Pancreas (tissue), 10 donors: ENCODE measurements at regions of chr11 and their contacts with region 1.

Region 1: DNA sequence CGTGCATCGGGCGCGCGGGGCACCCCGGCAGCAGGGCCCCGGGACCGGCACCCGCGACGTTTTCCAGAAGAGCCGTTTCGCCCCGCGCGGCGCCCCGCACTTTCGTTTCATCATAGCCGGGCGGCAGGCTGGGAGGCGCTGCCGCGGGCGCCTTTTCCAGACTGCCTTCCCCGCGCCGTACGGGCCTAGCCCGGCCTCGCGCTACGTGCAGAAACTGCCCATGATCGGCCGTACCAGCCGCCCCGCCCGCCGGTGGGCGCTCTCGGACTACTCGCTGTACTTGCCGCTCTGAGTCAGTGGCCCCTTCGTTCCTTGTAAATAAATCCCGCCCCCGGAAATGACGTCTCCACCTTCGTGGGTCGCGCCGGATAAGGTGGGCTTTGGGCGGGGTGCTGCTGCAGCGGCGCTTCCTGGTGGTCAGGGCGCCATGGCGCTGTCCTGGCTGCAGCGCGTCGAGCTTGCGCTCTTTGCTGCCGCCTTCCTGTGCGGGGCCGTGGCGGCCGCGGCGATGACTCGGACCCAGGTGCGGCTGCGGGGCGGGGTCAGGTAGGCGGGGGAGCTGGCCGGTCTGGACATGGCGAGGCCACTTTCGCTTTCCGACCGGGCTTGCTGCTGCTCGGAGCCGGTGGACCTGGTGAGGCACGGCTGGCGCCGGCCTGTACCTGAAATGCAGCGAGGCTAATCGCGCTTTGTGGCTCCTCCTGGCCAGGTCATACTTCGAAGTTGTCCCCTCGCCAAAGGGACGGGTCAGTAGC is at the start of gene TMEM179B:
- DNase-seq: peak; percentile 95 to 99 (median 97)
- ATAC-seq: peak; percentile 83 to 92 (median 86)
- H3K4me3 ChIP-seq: peak within 1 kb of the TSS; percentile 77 to 86 (median 84)
- H3K27ac ChIP-seq: peak within 1 kb of the TSS; percentile 94 to 96 (median 95)
- H3K4me1 ChIP-seq: peaks cover 5 to 25% (median 23%) of the 10 kb centered on the region in 3 donors
- H3K27me3 ChIP-seq: no peaks in the 10 kb centered on the region
- CTCF ChIP-seq: peak in 1 of 4 donors; percentile 8
- total RNA-seq, gene TMEM179B: 14.8 to 26.2 (median 19.1) TPM

Region 2: DNA sequence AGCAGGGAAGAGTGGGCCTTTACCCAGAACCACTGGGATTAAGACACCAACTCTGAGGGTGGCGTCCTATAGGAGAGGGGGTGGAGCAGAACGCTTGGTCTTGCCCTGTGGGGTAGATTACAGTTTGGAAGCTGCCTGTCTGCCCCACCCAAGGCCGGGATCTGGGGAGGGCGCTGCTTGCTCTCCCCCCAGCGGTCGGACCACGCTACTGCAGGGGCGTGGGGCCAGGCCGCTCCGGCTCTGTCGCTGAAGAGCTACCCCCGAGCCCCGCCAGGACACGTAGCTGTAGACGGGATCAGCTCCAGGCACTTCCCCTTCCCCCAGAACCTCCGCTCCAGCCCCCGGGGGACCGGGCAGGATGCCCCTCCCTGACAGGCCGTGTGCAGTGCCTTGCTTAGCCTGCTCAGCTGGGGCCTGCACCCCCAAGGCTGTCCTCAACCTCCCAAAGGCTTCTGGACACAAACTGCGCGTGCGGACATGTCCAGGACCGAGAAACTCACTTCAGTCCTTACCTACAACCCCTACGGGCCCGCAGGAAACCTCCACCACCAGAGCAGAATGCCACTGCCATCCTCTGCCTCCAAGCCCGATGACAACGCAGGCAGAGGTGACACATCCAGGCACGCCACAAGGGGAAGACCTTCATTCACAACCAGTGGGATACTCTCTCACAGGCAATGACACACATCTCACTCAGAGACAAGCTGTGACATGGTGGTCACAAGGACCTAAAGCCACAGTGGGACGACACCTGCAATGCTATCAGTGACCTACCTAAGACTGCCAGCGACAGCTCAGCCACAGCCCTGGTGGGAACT is 244.2 kb before region 1 on chr11:
- intact Hi-C with region 1: no loop called
- DNase-seq: peak in 5 of 6 donors; percentile 66 to 92 (median 77)
- ATAC-seq: peak; percentile 32 to 65 (median 54)
- H3K4me3 ChIP-seq: peak overlapping the region in 2 of 4 donors; percentile 84 to 88
- H3K27ac ChIP-seq: peak overlapping the region in 2 of 4 donors; percentile 47 to 55
- H3K4me1 ChIP-seq: peaks cover 10 to 48% (median 20%) of the 10 kb centered on the region in 3 donors
- H3K27me3 ChIP-seq: no peaks in the 10 kb centered on the region
- CTCF ChIP-seq: peak; percentile 98 to 99 (median 98)

Region 3: GRCh38 chr11:62860835-62861563 is 73.8 kb after region 1 on chr11:
- intact Hi-C with region 1: loop called in 2 of 3 experiments (anchors 5 to 10 kb)
- DNase-seq: no peak
- ATAC-seq: no peak
- H3K4me3 ChIP-seq: no peak overlapping the region
- H3K27ac ChIP-seq: no peak overlapping the region
- H3K4me1 ChIP-seq: no peaks in the 10 kb centered on the region
- H3K27me3 ChIP-seq: no peaks in the 10 kb centered on the region
- CTCF ChIP-seq: no peak